ENCODE measurements at regions of chr12 and their contacts with region 1.

Region 1: DNA sequence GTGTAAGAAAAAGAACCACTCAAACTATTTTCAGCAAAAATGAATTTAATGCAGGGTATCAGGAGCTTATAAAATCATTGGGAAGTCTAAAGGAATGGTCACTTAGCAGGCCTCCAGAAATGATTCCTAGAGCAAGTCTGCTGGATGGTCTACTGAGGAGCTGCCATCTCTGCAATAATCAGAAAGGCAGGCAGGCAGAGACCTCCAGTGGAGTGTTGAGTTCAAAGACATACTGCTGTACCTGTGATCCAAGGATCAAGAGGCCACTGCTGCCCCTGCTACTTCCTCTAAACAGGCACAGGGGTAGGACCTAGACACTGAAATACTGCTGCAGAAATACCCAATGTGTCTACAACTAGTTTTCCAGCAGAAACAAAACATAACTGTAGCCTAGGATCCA is 14.5 kb upstream of the KICS2 start:
- DNase-seq: peak; percentile 16
- H3K4me3 ChIP-seq: no peak overlapping the region
- H3K27ac ChIP-seq: no peak overlapping the region
- H3K4me1 ChIP-seq: no peaks in the 10 kb centered on the region
- H3K27me3 ChIP-seq: no peaks in the 10 kb centered on the region
- CTCF ChIP-seq: no peak
- POLR2A ChIP-seq: no peak

Region 2: GRCh38 chr12:63838411-63838810 is 398.1 kb before region 1 on chr12:
- CTCF ChIA-PET with region 1: interaction called, 57 read pairs
- POLR2A ChIA-PET with region 1: no interaction called
- dilution Hi-C with region 1: no loop called
- intact Hi-C with region 1: no loop called
- DNase-seq: no peak
- H3K4me3 ChIP-seq: no peak overlapping the region
- H3K27ac ChIP-seq: no peak overlapping the region
- H3K4me1 ChIP-seq: peaks cover 3% of the 10 kb centered on the region
- H3K27me3 ChIP-seq: peaks cover 2% of the 10 kb centered on the region in 2 experiments
- CTCF ChIP-seq: no peak
- POLR2A ChIP-seq: no peak

Region 3: DNA sequence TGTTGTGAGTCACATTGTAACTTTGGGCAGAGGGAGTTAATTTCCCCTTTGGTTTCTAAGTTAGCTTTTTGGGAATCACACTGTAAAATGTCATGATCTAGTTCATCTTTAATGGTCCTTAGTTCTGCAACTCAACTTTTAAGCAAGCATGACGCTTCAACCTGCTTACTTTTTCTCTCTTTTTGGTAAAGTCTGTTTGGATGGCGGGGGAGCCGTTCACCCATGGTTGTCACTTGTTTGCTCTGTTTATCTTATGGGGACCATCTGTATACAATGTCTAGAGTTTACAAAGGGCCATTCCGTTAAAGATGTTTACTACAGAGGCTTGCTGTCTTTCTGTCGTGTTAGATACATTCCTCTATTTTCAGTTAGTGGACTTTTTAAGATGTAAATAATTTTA is 220.0 kb before region 1 on chr12:
- CTCF ChIA-PET with region 1: no interaction called
- POLR2A ChIA-PET with region 1: interaction called, 11 read pairs
- dilution Hi-C with region 1: no loop called
- intact Hi-C with region 1: no loop called
- DNase-seq: no peak
- H3K4me3 ChIP-seq: no peak overlapping the region
- H3K27ac ChIP-seq: no peak overlapping the region
- H3K4me1 ChIP-seq: no peaks in the 10 kb centered on the region
- H3K27me3 ChIP-seq: no peaks in the 10 kb centered on the region
- CTCF ChIP-seq: no peak
- POLR2A ChIP-seq: no peak

Region 4: GRCh38 chr12:64293654-64294364 is 57.3 kb after region 1 on chr12:
- CTCF ChIA-PET with region 1: no interaction called
- POLR2A ChIA-PET with region 1: no interaction called
- dilution Hi-C with region 1: no loop called
- intact Hi-C with region 1: no loop called
- DNase-seq: no peak
- H3K4me3 ChIP-seq: no peak overlapping the region
- H3K27ac ChIP-seq: no peak overlapping the region
- H3K4me1 ChIP-seq: no peaks in the 10 kb centered on the region
- H3K27me3 ChIP-seq: no peaks in the 10 kb centered on the region
- CTCF ChIP-seq: no peak
- POLR2A ChIP-seq: no peak